Activated CD4-positive, alpha-beta memory T cell treated with anti-CD3 and anti-CD28 coated beads for 36 hours (primary cell): ENCODE measurements at regions of chr7 and their contacts with region 1.

Region 1: DNA sequence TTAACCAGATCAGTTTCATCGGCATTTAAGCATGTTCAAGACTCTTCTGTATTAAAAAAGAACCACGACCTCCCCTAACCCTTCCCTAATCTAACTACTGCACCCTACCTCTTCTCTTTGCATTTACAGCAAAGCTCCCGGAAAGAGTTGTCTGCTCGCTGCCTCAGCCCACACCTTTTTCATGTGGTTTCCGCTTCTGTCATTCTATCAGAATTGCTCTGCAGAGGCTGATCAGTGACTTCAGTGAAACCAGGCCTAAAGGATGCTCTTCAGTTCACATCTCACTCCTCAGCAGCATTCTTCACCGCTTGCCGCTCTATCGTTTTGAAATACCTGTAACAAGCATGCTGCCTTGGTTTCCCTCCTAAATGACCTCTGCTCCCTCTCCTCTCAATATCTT is 160.9 kb downstream of the SDK1 start:
- DNase-seq: peak; percentile 83
- H3K4me3 Mint-ChIP-seq: peak overlapping the region; percentile 59
- H3K27ac Mint-ChIP-seq: peak overlapping the region; percentile 80
- H3K4me1 Mint-ChIP-seq: peaks cover 29% of the 10 kb centered on the region
- H3K27me3 Mint-ChIP-seq: no peaks in the 10 kb centered on the region

Region 2: GRCh38 chr7:3408814-3409595 is 52.9 kb before region 1 on chr7:
- CTCF ChIA-PET with region 1: no interaction called
- POLR2A ChIA-PET with region 1: no interaction called
- intact Hi-C with region 1: loop called (anchors 5 kb)
- DNase-seq: no peak
- H3K4me3 Mint-ChIP-seq: no peak overlapping the region
- H3K27ac Mint-ChIP-seq: no peak overlapping the region
- H3K4me1 Mint-ChIP-seq: peaks cover 8% of the 10 kb centered on the region
- H3K27me3 Mint-ChIP-seq: peaks cover 12% of the 10 kb centered on the region

Region 3: DNA sequence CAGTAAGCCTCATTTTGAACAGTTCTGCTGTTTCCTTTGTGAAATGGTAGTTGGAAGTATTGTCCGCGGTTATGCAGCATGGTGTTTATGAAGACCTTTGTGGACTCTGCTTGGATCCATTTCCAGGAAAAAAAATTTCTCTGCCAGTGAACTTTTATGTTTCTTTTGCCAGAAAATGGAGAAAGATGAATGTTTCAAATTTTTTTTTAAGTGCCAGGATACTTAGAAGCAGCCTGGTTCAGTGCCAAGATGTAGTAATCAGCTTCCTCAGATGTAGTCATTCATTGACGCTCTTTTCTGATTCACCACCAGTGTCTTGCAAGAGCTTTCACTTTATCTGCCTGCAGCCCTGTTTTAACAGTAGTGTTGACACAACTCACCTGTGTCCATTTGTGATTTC is 97.4 kb after region 1 on chr7:
- CTCF ChIA-PET with region 1: no interaction called
- POLR2A ChIA-PET with region 1: no interaction called
- intact Hi-C with region 1: no loop called
- DNase-seq: no peak
- H3K4me3 Mint-ChIP-seq: no peak overlapping the region
- H3K27ac Mint-ChIP-seq: no peak overlapping the region
- H3K4me1 Mint-ChIP-seq: peaks cover 2% of the 10 kb centered on the region
- H3K27me3 Mint-ChIP-seq: peaks cover 2% of the 10 kb centered on the region

Region 4: DNA sequence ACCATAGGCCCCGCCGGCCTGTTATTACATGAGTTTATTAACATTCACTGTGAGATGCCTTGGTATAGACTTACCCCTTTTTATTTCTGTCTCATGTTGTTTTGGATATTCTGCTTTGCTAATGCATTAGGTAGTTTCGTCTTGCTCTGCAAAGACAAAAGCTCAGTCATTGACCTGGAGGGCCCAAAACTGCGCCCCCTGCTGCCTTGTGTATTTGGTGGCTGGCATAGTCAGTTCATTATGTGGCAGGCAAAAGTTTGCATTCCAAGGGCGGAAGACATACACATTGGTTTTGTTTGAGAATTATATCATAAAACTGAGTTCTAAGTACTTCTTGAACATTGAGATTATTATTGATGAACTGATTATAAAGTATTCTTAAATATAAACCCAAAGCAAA is 211.6 kb after region 1 on chr7:
- CTCF ChIA-PET with region 1: no interaction called
- POLR2A ChIA-PET with region 1: no interaction called
- intact Hi-C with region 1: loop called (anchors 5 kb)
- DNase-seq: peak; percentile 66
- H3K4me3 Mint-ChIP-seq: no peak overlapping the region
- H3K27ac Mint-ChIP-seq: no peak overlapping the region
- H3K4me1 Mint-ChIP-seq: no peaks in the 10 kb centered on the region
- H3K27me3 Mint-ChIP-seq: no peaks in the 10 kb centered on the region